CD8-positive, alpha-beta T cell (primary cell): ENCODE measurements at regions of chr19 and their contacts with region 1.

Region 1: GRCh38 chr19:44770550-44771257 is 7.0 kb upstream of the CBLC start:
- DNase-seq: peak; percentile 96 to 99 (median 98)
- ATAC-seq: peak; percentile 100
- H3K4me3 ChIP-seq: peak overlapping the region in 1 of 2 experiments; percentile 3
- H3K4me3 Mint-ChIP-seq: peak overlapping the region; percentile 52
- H3K27ac ChIP-seq: peak overlapping the region in 1 of 2 experiments; percentile 36
- H3K27ac Mint-ChIP-seq: peak overlapping the region; percentile 75
- H3K4me1 ChIP-seq: peaks cover 22% of the 10 kb centered on the region
- H3K4me1 Mint-ChIP-seq: peaks cover 25% of the 10 kb centered on the region
- H3K27me3 ChIP-seq: no peaks in the 10 kb centered on the region
- H3K27me3 Mint-ChIP-seq: no peaks in the 10 kb centered on the region
- CTCF ChIP-seq: peak; percentile 67

Region 2: DNA sequence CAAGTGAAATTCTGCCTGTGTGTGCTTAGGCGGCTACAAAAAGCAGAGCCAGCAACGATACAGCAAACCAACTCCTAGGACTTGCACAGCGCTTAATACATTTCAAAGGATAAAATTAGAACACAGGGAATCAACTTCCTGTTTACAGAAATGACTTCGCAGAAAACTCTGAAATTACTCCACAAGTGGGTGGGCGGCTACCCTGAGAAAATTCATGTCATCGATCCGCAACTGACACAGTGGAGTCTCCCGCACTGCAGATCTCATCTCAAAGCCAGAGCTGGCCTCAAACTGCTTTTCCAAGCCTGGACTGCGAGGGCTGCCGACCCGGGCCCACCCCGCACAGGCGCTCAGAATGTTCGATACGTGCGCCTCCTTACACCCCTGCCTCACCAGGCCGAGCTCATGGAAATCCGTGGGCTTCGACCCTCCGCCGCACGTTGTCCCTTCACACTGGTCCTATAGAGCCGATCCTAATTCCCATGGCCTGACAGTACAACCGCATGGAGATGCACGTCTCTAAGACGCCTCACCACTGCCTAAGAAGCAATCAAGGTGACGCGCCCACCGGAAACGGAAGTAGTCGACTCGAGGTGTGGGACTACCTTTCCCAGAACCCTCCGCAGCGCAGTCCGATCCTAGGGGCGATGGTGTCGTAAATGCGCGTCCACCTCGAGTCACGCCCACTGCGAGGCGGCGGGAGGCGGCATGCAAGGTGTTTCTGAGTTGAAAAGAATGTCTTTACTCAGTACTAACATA is 322.6 kb before region 1 on chr19 and contains the start of gene ZNF229:
- CTCF ChIA-PET with region 1: no interaction called
- POLR2A ChIA-PET with region 1: no interaction called
- intact Hi-C with region 1: no loop called
- DNase-seq: peak; percentile 31 to 85 (median 70)
- ATAC-seq: peak; percentile 98
- H3K4me3 ChIP-seq: peak within 1 kb of the TSS; percentile 46 to 80
- H3K4me3 Mint-ChIP-seq: peak within 1 kb of the TSS; percentile 87
- H3K27ac ChIP-seq: no peak within 1 kb of the TSS
- H3K27ac Mint-ChIP-seq: peak within 1 kb of the TSS; percentile 83
- H3K4me1 ChIP-seq: peaks cover 7% of the 10 kb centered on the region
- H3K4me1 Mint-ChIP-seq: peaks cover 14% of the 10 kb centered on the region
- H3K27me3 ChIP-seq: no peaks in the 10 kb centered on the region
- H3K27me3 Mint-ChIP-seq: peaks cover 3% of the 10 kb centered on the region
- CTCF ChIP-seq: no peak
- total RNA-seq, gene ZNF229: 0.25 to 0.76 TPM

Region 3: DNA sequence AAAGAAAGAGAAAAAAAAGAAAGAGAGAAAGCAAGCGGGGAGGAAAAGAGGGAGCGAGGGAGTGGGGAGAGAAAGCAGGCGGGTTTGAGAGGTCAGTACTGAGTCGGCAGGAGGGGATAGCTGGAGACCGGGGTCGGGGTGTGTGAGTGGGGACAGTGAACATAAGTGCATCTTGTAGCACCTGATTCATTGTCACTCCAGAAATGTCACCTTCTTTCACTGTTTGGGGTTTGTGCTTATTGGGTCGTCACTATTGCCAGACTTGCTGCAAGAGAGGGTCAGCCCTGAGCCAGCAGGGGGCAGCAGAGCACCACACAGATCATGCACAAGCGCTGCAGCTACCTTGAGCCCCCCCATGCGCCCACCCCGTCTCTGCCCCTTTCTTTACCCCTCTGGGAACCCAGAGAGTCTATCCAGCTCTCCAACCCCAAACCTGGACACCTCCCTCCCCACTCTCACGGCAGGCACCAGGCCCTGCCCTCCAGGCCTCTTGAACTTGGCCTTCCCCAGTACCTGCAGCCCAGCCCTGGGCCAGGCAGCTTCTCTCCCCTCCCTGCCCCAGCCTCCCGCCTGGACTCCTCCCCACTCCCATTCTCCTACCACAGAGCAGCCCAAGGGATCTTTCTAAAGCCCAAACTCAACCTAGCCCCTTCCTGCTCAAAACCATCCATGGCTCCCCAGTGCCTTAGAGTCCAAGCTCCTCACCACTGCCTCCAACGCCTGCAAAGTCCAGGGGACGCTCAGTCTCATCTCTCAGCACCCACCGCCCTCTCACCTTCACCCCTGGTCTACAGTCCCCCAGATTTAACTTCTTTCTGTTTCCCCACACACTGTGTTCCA is 81.4 kb before region 1 on chr19:
- CTCF ChIA-PET with region 1: interaction called, 72 read pairs
- POLR2A ChIA-PET with region 1: interaction called, 3 read pairs
- intact Hi-C with region 1: loop called (anchors 1 kb)
- DNase-seq: peak; percentile 64 to 87 (median 81)
- ATAC-seq: peak; percentile 59
- H3K4me3 ChIP-seq: no peak overlapping the region
- H3K4me3 Mint-ChIP-seq: no peak overlapping the region
- H3K27ac ChIP-seq: no peak overlapping the region
- H3K27ac Mint-ChIP-seq: no peak overlapping the region
- H3K4me1 ChIP-seq: peaks cover 25% of the 10 kb centered on the region
- H3K4me1 Mint-ChIP-seq: peaks cover 22% of the 10 kb centered on the region
- H3K27me3 ChIP-seq: peaks cover 0 to 4% of the 10 kb centered on the region in 2 experiments
- H3K27me3 Mint-ChIP-seq: peaks cover 16% of the 10 kb centered on the region
- CTCF ChIP-seq: peak; percentile 81

Region 4: DNA sequence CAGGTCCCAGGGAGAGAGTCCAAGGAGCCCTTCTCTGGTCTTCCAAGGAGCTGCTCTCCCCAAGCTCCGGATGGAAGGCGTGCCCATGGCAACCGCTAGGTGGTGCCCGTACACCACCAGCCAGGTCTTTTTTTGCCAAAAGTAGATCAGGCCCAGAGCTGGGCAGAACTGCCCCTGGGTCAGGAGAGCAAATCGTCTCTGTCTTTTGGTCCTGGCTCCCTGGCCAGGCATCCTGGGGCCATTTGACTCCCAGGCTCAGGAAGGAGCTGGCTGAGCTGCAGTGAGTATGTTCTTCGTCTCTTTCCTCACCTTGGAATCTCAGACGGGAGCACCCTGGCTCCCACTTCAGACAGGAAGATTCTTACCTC is 46.8 kb before region 1 on chr19:
- CTCF ChIA-PET with region 1: interaction called, 638 read pairs
- POLR2A ChIA-PET with region 1: interaction called, 45 read pairs
- intact Hi-C with region 1: loop called (anchors 1 kb)
- DNase-seq: peak; percentile 62 to 89 (median 75)
- ATAC-seq: peak; percentile 92
- H3K4me3 ChIP-seq: no peak overlapping the region
- H3K4me3 Mint-ChIP-seq: no peak overlapping the region
- H3K27ac ChIP-seq: no peak overlapping the region
- H3K27ac Mint-ChIP-seq: no peak overlapping the region
- H3K4me1 ChIP-seq: peaks cover 25% of the 10 kb centered on the region
- H3K4me1 Mint-ChIP-seq: peaks cover 20% of the 10 kb centered on the region
- H3K27me3 ChIP-seq: peaks cover 0 to 4% of the 10 kb centered on the region in 2 experiments
- H3K27me3 Mint-ChIP-seq: no peaks in the 10 kb centered on the region
- CTCF ChIP-seq: peak; percentile 94

Region 5: GRCh38 chr19:44746946-44747738 is 23.6 kb before region 1 on chr19:
- CTCF ChIA-PET with region 1: interaction called, 6 read pairs
- POLR2A ChIA-PET with region 1: no interaction called
- intact Hi-C with region 1: loop called (anchors 1 kb)
- DNase-seq: peak; percentile 59 to 97 (median 91)
- ATAC-seq: peak; percentile 86
- H3K4me3 ChIP-seq: peak overlapping the region; percentile 60 to 63
- H3K4me3 Mint-ChIP-seq: peak overlapping the region; percentile 91
- H3K27ac ChIP-seq: peak overlapping the region; percentile 41 to 89
- H3K27ac Mint-ChIP-seq: peak overlapping the region; percentile 95
- H3K4me1 ChIP-seq: peaks cover 42% of the 10 kb centered on the region
- H3K4me1 Mint-ChIP-seq: peaks cover 49% of the 10 kb centered on the region
- H3K27me3 ChIP-seq: no peaks in the 10 kb centered on the region
- H3K27me3 Mint-ChIP-seq: no peaks in the 10 kb centered on the region
- CTCF ChIP-seq: no peak

Region 6: GRCh38 chr19:44782729-44783128 is 12.0 kb after region 1 on chr19:
- CTCF ChIA-PET with region 1: interaction called, 13 read pairs
- POLR2A ChIA-PET with region 1: interaction called, 5 read pairs
- intact Hi-C with region 1: no loop called
- DNase-seq: no peak
- ATAC-seq: no peak
- H3K4me3 ChIP-seq: no peak overlapping the region
- H3K4me3 Mint-ChIP-seq: no peak overlapping the region
- H3K27ac ChIP-seq: no peak overlapping the region
- H3K27ac Mint-ChIP-seq: no peak overlapping the region
- H3K4me1 ChIP-seq: no peaks in the 10 kb centered on the region
- H3K4me1 Mint-ChIP-seq: peaks cover 4% of the 10 kb centered on the region
- H3K27me3 ChIP-seq: peaks cover 0 to 5% of the 10 kb centered on the region in 2 experiments
- H3K27me3 Mint-ChIP-seq: peaks cover 14% of the 10 kb centered on the region
- CTCF ChIP-seq: no peak